Motor neuron (in vitro differentiated cells): ENCODE measurements at regions of chr17 and their contacts with region 1.

Region 1: GRCh38 chr17:49496183-49496866 is 1.2 kb downstream of the NGFR start:
- ATAC-seq: peak; percentile 62 to 84 (median 68)
- H3K4me3 ChIP-seq: peak overlapping the region; percentile 69 to 99 (median 85)
- H3K27ac ChIP-seq: peak overlapping the region; percentile 82 to 83
- H3K4me1 ChIP-seq: peaks cover 28 to 35% of the 10 kb centered on the region in 2 donors

Region 2: GRCh38 chr17:49434821-49435670 is 61.3 kb before region 1 on chr17:
- in situ Hi-C with region 1: loop called in 1 of 9 experiments (anchors 10 kb)
- ATAC-seq: peak in 4 of 8 experiments; percentile 28 to 91 (median 71)
- H3K4me3 ChIP-seq: peak overlapping the region in 1 of 5 donors; percentile 8
- H3K27ac ChIP-seq: no peak overlapping the region
- H3K4me1 ChIP-seq: peaks cover 42 to 47% of the 10 kb centered on the region in 2 donors

Region 3: GRCh38 chr17:49450735-49451134 is 45.6 kb before region 1 on chr17:
- in situ Hi-C with region 1: no loop called
- ATAC-seq: peak in 6 of 8 experiments; percentile 15 to 63 (median 30)
- H3K4me3 ChIP-seq: no peak overlapping the region
- H3K27ac ChIP-seq: no peak overlapping the region
- H3K4me1 ChIP-seq: peaks cover 27 to 51% of the 10 kb centered on the region in 2 donors

Region 4: DNA sequence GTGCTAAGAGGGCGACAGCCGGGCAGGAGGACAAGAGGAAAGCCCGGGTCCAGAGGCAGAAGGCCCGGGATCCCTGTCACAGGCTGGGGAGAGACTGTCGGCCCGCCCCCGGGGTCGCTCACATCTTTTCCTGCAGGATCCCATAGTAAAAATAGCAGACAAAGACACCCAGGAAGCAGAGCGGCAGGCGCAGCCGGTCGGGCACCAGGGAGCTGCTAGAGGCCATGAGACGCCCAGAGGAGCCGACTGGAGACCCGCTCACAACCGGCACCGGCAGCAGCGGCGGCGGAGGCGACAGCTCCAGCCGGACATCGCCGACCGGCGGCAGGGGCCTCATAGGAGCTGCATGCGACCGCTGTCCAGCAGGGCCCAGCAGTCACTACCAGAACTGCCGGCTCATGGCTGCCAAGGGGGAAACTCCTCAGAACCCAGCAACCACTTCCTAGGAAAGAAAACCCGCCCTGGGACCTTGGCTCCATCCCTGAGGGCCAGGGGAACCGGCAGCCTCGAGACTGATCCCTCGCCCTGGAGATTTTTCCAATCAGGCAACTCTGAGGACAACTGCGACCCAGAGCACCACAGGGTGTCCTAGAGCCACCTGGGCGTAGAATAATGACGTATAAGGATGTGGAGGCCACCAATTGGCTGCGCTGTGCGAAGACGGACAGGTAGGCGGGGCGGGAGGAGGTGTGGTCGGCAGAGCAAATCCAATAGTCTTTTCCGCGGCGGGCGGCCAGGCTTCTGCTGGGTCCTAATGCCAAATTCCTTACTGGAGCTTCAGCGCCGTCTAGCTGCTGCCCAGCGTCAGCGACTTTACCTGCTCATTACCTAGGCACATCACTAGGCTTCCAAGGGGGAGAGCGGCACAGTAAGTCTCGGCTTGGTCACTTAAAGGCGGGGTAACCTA is 211.5 kb after region 1 on chr17 and contains the start of gene SLC35B1:
- in situ Hi-C with region 1: no loop called
- ATAC-seq: peak; percentile 95 to 99 (median 98)
- H3K4me3 ChIP-seq: peak within 1 kb of the TSS; percentile 72 to 98 (median 91)
- H3K27ac ChIP-seq: peak within 1 kb of the TSS; percentile 98 to 99
- H3K4me1 ChIP-seq: peaks cover 7% of the 10 kb centered on the region in 2 donors
- total RNA-seq, gene SLC35B1: 35.7 to 66.0 (median 56.1) TPM